Vagina (tissue), 2 donors: ENCODE measurements at regions of chr3 and their contacts with region 1.

Region 1: DNA sequence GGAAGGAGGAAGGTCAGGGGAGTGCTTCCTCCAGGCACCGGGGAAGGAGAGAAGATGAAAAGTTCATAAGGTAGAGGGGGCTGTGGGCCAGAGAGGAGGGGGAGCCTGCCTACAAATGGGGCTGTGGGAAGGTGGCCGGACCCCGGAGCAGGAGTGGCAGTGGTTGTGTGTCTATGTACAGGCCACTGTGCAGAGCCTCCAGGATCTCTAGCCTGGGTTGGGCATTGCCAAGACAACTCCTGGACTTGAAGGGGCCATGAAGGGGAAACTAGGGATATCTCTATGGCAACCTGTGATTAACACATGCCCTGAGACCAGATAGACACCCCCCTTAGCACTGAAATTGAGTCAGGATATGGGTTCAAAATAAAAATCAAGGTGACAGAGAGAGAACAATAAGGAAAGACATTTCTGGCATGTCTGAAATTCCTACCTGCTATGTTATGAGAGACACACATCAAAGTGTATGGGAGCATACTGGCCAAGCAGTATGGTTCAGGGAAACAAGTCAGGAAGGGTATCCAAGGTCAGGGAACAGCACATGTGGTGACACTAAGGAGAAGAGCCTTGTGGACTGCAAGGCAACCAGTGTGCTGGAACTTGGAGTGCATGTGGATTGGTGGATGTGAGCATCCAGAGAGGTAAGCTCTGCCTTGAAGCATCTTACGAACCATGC is 388.7 kb downstream of the SHQ1 start:
- DNase-seq: no peak
- H3K4me3 ChIP-seq: no peak overlapping the region
- H3K27ac ChIP-seq: no peak overlapping the region
- H3K4me1 ChIP-seq: peaks cover 6% of the 10 kb centered on the region
- H3K27me3 ChIP-seq: no peaks in the 10 kb centered on the region
- CTCF ChIP-seq: no peak
- POLR2A ChIP-seq: no peak

Region 2: GRCh38 chr3:72480366-72480765 is 20.9 kb after region 1 on chr3:
- intact Hi-C with region 1: loop called (anchors 1 kb)
- DNase-seq: no peak
- H3K4me3 ChIP-seq: no peak overlapping the region
- H3K27ac ChIP-seq: no peak overlapping the region
- H3K4me1 ChIP-seq: no peaks in the 10 kb centered on the region
- H3K27me3 ChIP-seq: no peaks in the 10 kb centered on the region
- CTCF ChIP-seq: no peak
- POLR2A ChIP-seq: no peak